Esophagus squamous epithelium (tissue), 5 donors: ENCODE measurements at regions of chr17 and their contacts with region 1.

Region 1: DNA sequence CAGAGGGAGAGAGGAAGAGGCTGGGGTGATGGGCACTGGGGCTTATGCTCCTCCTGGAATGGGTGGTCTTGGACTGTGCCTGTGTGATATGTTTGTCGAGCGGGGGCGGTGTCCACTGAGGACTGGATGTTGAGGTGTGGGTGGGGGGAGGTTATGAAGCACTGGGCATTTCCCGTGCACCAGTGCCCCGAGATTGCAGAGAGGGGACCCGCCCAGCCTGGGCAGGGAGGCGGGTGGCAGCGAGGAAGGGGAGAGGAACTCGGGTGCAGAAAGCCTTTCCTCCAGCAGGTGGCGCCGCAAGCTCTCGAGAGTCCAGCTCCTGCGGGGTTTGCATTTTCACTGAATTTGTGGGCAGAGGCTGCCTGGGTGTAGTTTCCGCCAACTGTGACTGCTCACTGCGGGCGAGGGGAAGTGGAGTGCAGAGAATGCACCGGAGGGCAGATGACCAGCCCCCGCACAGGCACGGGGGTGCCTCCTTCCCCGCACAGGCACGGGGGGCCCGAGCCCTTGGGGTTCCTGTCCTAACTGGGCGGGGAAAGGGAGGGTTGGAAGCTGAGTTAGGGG is 190.6 kb downstream of the SEC14L1 start:
- DNase-seq: peak; percentile 64
- H3K4me3 ChIP-seq: peak overlapping the region in 3 of 4 donors; percentile 21 to 38 (median 29)
- H3K27ac ChIP-seq: peak overlapping the region; percentile 22 to 83 (median 64)
- H3K4me1 ChIP-seq: peaks cover 11 to 71% (median 35%) of the 10 kb centered on the region in 3 donors
- H3K27me3 ChIP-seq: no peaks in the 10 kb centered on the region
- CTCF ChIP-seq: peak; percentile 94 to 99 (median 97)
- POLR2A ChIP-seq: no peak

Region 2: GRCh38 chr17:77034677-77035424 is 296.5 kb before region 1 on chr17:
- intact Hi-C with region 1: no loop called
- DNase-seq: no peak
- H3K4me3 ChIP-seq: no peak overlapping the region
- H3K27ac ChIP-seq: no peak overlapping the region
- H3K4me1 ChIP-seq: peaks cover 0 to 6% (median 0%) of the 10 kb centered on the region in 3 donors
- H3K27me3 ChIP-seq: peaks cover 0 to 71% (median 0%) of the 10 kb centered on the region in 4 donors
- CTCF ChIP-seq: no peak
- POLR2A ChIP-seq: no peak

Region 3: DNA sequence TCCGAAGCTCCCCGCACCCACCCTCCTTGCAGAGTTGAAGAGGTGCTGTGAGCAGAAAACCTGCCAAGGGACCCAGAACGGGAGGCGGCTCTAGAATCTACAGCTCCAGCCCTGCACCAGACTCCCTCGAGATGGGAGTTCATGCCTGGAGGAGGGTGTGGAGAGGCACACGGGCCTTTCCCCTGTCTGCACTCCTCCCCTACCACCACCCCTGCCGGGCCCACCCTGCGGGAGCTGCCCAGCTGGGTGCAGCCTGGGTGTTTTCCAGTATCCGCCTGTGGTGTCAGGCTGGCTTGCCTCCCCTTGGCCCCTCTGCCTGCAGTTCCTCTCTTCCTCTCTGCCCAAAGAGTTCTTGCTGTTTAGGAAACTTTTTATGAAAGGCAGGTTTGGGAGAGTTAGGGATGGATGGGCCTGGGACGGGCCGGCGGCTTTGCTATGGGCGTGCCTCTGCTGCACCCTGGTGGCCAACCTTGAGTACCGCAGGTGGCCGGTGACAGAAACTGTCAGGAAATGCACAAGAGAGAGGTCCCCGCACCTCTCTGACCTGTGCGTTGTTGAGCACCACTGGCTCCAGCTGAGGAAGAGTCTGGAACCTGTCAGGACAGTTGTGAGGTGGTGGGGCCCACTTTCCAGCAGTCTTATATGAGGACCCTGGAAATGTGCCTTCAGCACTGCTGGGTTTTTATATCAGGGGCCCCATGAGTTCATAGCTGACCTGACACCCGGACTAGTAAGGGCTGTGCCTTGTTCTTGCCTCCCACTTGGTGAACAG is 163.5 kb after region 1 on chr17:
- intact Hi-C with region 1: loop called (anchors 2 kb)
- DNase-seq: no peak
- H3K4me3 ChIP-seq: no peak overlapping the region
- H3K27ac ChIP-seq: peak overlapping the region in 3 of 4 donors; percentile 22 to 56 (median 54)
- H3K4me1 ChIP-seq: peaks cover 10 to 47% (median 12%) of the 10 kb centered on the region in 3 donors
- H3K27me3 ChIP-seq: no peaks in the 10 kb centered on the region
- CTCF ChIP-seq: peak; percentile 97 to 100 (median 99)
- POLR2A ChIP-seq: no peak